ENCODE measurements at regions of chr4 and their contacts with region 1.

Region 1: DNA sequence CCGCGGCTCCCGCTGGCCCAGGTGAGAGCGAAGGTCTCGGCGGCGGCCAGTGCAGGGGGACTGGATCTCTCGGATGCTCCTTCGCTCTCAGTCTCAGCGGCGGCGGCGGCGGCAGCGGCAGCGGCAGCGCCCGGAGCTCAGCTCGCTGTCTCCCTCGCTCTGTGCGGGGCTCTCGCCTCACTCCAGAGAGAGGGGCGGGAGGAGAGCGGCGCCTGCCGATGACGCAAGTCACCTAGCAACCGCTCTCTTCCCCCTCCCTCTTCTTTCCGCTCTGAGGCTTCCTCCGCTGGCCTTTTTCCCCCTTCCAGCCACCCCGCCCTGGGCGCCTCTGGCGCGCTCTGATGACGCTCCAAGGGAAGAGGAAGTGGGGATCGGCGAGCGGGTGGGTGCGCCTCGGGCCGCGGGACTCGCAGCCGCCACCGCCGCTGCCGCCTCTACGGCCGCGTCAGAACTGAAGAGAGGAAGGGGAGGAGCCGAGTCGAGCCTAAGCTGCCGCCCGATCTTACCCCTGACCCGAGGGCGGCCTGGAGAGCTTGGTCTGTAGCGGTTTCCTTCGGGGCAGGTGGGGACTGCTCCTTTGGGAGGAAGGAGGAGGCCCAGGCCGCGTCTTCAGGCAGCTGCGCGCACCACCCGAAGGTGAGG is at the start of gene FBXW7:
- DNase-seq: peak; percentile 100
- H3K4me3 Mint-ChIP-seq: peak within 1 kb of the TSS; percentile 99
- H3K27ac Mint-ChIP-seq: peak within 1 kb of the TSS; percentile 100
- H3K4me1 Mint-ChIP-seq: peaks cover 63% of the 10 kb centered on the region
- H3K27me3 Mint-ChIP-seq: no peaks in the 10 kb centered on the region
- total RNA-seq, gene FBXW7: 53.0 and 53.3 TPM in 2 replicates

Region 2: DNA sequence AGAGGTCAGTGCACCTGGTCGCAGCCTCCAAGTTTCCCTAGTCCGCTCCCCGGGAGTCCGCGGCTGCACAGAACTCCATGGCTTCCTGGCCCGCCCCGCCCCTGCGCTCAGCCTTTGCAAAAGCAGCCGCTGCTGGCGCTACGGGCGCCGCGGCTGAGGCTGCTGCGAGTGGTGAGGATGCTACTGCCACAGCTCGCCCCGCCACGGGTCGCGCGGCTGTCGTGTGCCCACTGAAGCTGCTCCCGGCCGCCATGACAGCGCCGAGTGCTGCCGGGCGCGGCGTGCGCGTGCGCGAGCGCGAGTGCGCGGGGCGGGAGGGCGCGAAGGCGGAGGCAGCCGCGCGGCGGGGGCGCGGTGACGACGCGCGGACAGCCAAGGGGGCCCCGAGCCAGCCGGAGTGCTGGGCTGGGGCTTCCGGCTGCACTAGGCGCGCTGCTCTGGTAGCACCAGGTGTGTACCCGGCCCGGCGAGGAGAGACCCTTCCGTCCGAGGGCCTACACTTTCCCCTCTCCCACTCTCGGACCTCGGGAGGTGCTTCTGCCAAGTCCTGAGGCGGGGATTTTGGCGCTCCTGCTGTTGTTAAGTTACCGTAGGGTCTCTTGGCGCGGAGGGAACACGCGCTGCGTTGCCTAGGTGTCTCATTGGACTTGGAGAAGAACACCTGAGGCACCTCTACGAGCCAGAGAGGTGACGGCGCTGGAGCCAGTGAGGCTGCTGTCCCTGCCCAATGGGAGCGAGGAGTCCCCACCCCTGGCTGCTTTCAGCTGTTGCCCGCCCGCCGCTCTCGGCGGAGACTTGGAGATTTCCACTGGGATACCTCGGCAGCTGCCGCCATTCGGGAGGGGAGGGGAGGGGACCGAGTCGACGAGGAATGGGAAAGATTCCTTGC is 1520.3 kb before region 1 on chr4:
- intact Hi-C with region 1: loop called (anchors 10 kb)
- DNase-seq: peak; percentile 79
- H3K4me3 Mint-ChIP-seq: peak overlapping the region; percentile 100
- H3K27ac Mint-ChIP-seq: peak overlapping the region; percentile 99
- H3K4me1 Mint-ChIP-seq: peaks cover 34% of the 10 kb centered on the region
- H3K27me3 Mint-ChIP-seq: no peaks in the 10 kb centered on the region

Region 3: GRCh38 chr4:152100379-152101201 is 435.4 kb before region 1 on chr4:
- intact Hi-C with region 1: loop called (anchors 5 kb)
- DNase-seq: peak; percentile 78
- H3K4me3 Mint-ChIP-seq: peak overlapping the region; percentile 75
- H3K27ac Mint-ChIP-seq: peak overlapping the region; percentile 97
- H3K4me1 Mint-ChIP-seq: peaks cover 79% of the 10 kb centered on the region
- H3K27me3 Mint-ChIP-seq: no peaks in the 10 kb centered on the region

Region 4: DNA sequence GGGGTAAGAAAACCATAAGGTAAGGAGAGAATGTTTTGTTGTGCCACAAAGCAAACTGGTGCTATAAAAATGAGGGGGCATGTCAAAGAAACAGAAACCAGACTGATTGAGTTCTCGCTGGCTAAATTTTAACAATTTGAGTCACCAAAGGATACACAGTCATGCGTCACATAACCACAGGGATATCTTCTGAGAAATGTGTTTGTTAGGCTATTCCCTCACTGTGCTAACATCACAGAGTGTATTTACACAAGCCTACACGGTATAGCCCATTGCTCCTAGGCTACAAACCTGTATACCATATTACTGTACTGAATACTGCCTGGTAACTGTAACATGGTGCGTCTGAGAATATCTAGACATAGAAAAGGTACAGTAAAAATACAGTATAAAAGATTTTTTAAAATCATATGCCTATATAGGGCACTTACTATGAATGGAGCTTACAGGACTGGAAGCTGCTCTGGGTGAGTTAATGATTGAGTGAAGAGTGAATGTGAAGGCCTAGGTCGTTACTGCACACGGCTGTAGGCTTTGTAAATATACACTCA is 50.2 kb before region 1 on chr4:
- intact Hi-C with region 1: loop called (anchors 1 kb)
- DNase-seq: peak; percentile 60
- H3K4me3 Mint-ChIP-seq: peak overlapping the region; percentile 40
- H3K27ac Mint-ChIP-seq: peak overlapping the region; percentile 77
- H3K4me1 Mint-ChIP-seq: peaks cover 48% of the 10 kb centered on the region
- H3K27me3 Mint-ChIP-seq: no peaks in the 10 kb centered on the region

Region 5: GRCh38 chr4:152556283-152556682 is 20.3 kb after region 1 on chr4:
- intact Hi-C with region 1: loop called (anchors 1 kb)
- DNase-seq: no peak
- H3K4me3 Mint-ChIP-seq: peak overlapping the region; percentile 41
- H3K27ac Mint-ChIP-seq: peak overlapping the region; percentile 77
- H3K4me1 Mint-ChIP-seq: peaks cover 43% of the 10 kb centered on the region
- H3K27me3 Mint-ChIP-seq: no peaks in the 10 kb centered on the region

Region 6: DNA sequence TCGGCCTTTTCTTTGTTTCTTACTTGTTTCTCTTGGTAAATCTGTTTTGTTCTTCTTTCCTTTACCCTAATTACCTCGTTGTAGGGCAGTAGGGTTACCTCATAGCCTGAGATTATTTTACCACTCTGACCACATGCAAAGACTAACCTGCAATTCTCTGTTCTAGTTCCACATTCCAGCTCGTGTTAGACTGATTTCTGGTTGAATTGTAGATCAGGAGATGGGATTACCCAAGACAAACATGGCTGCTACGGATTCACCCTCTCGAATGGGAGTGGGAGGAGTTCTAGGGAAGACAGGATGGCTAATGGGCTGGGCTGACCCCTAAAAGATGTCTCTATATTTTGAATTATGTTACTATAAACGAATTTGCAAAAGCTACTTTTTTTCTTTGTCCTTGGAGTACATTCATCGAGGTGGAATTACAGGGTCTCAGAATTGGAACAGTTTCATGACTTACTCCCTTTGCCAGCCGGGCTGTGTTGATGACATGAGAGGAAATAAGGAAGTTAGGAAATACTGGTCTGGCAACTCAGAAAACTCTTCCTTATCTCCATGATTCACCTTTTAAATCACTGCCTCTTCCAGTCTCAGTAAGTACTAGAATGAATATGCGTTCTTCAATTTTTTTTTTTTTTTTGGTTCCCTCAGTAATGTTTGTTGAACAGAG is 36.5 kb after region 1 on chr4:
- intact Hi-C with region 1: no loop called
- DNase-seq: no peak
- H3K4me3 Mint-ChIP-seq: no peak overlapping the region
- H3K27ac Mint-ChIP-seq: no peak overlapping the region
- H3K4me1 Mint-ChIP-seq: no peaks in the 10 kb centered on the region
- H3K27me3 Mint-ChIP-seq: peaks cover 7% of the 10 kb centered on the region

Region 7: GRCh38 chr4:152696764-152697261 is 160.8 kb after region 1 on chr4:
- intact Hi-C with region 1: loop called (anchors 5 kb)
- DNase-seq: peak; percentile 64
- H3K4me3 Mint-ChIP-seq: no peak overlapping the region
- H3K27ac Mint-ChIP-seq: no peak overlapping the region
- H3K4me1 Mint-ChIP-seq: peaks cover 23% of the 10 kb centered on the region
- H3K27me3 Mint-ChIP-seq: peaks cover 13% of the 10 kb centered on the region

Region 8: DNA sequence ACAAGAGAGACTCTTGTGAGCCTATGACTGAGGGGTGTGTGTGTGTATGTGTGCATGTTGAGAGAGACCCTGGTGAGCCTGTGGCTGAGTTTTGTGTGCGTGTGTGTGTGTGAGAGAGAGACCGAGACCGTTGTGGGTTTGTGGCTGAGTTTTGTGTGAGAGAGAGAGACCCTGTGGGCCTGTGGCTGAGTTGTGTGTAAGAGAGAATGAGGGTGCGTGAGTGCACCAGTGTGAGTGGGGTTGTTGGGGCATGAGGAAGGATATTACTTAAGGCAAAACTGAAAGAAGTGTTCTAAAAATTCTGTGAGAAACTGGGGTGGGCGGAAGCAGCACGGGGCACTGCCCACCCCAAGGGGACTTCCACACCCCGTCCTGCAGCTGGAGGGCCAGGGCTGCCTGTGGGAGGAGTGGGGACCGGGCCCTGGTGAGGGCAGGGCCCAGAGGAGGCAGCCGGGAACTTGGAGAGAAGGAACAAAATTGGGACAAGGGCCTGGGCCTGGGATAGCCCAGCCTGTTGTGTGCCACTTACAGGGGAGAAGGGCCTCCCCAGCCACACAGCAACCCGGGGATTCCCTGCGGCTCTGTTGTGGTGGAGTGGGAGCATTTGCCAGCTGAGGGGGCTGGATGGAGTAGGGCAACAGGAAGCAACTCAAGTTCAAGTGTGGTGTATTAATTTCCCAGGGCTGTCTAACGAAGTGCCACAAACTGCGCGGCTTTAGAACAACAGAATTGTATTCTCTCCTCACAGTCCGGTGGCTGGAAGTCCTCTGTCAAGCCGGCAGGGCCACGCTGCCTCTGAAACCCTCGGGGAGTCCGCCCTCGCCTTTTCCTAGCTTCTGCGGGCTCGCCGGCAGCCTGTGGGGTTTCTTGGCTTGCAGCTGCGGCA is 952.2 kb after region 1 on chr4:
- intact Hi-C with region 1: loop called (anchors 10 kb)
- DNase-seq: peak; percentile 66
- H3K4me3 Mint-ChIP-seq: peak overlapping the region; percentile 71
- H3K27ac Mint-ChIP-seq: peak overlapping the region; percentile 93
- H3K4me1 Mint-ChIP-seq: peaks cover 76% of the 10 kb centered on the region
- H3K27me3 Mint-ChIP-seq: no peaks in the 10 kb centered on the region

Measured in activated T-helper 1 cell treated with anti-CD3 and anti-CD28 coated beads, Interleukin-12 subunit alpha, Interleukin-12 subunit beta, Interleukin-2, Interleukin-4 antibody, amounts not matched to agents 30 ng/mL and 10 ng/mL and 1 ng/mL, durations not matched to agents 14 hours and 24 hours and 36 hours (primary cell).